PC-3 (cell line): ENCODE measurements at regions of chr1 and their contacts with region 1.

Region 1: DNA sequence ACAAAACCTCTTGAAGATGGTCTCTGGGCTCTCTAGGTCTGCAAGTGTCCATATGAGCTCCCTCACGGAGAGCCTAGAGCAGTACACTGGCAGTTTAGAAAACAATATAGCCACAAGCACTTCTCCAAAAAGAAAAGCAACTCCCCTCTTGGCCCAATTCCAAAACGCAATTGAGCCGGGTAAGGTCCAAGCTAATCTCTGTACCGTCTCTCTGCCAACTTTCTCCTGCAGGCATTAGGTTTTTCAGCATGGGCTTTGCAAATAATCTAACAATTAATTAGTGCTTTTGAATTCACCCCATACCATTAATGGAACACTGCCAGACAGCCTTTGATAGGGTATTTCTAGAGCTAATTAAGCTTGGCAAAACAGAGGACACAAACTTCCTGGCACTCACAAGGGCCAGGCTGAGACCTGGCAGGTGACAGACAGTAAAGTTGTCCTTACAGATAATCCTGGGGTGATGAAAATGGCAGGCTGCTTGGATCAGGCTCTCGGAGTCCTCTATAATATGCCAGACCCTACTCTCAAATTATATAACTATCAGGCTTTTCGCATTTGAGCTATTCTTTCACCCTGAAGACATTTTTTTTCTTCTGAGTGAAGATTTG is 39.8 kb downstream of the TGFBR3 start:
- DNase-seq: peak; percentile 59
- ATAC-seq: peak; percentile 4; the same call in 1 of the 2 replicates
- H3K4me3 ChIP-seq: no peak overlapping the region
- H3K27ac ChIP-seq: peak overlapping the region; percentile 69; the same call in 1 of the 2 replicates
- H3K4me1 ChIP-seq: peaks cover 30% of the 10 kb centered on the region
- H3K27me3 ChIP-seq: no peaks in the 10 kb centered on the region
- CTCF ChIP-seq: no peak

Region 2: DNA sequence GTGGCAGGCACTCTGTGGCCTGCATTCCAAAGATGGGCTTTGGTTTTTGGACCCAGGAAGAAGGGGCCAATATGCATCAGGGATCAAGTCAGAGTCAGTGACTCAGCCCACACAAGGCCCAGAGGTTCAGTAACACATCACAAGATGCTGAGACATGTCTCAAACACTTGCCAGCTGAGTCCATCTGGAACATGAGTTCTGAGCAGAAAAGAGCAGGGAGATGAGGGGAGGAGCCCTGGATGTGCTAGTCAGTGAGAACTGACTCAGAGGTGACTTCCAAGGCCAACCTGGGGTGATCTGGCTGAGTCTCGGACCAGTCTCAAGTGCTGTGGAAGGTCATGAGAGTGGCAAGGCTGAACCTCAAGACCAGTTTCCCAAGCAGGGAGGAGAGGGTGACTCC is 195.3 kb before region 1 on chr1:
- CTCF ChIA-PET with region 1: no interaction called
- POLR2A ChIA-PET with region 1: interaction called, 10 read pairs
- intact Hi-C with region 1: no loop called
- DNase-seq: peak; percentile 59
- ATAC-seq: peak; percentile 77
- H3K4me3 ChIP-seq: no peak overlapping the region
- H3K27ac ChIP-seq: no peak overlapping the region
- H3K4me1 ChIP-seq: peaks cover 17% of the 10 kb centered on the region
- H3K27me3 ChIP-seq: no peaks in the 10 kb centered on the region
- CTCF ChIP-seq: no peak

Region 3: DNA sequence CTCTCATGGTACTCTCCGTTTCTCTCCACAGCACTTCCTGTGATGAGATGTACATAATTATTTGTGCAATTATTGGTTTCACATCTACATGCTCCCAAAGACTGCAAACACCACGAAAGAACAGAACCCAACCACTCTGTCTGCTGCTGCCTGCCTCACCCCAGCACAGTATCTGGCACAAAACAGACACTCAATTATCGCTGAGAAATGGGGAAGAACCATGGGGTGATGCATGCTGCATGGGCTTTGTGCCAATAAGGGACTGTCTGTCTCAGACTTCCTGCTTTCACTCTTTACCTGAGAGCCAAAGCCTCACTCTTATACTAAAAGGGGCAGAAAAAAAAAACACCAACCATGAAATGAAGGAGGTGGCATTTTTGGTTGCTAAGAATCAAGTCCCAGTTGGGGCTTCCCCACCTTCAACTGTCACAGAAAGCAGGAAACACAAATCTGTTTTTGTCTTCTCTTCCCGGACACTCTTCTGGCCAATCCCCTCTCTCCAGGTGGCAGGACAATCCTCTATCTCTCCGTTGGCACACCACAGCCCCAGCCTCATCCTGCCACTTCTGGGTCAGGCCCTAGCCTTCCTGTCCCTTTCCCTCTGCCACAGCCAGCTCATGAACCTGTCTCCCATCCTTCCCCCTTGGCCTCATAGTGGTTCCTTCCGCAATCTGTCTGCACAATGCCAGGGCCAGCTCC is 42.1 kb before region 1 on chr1:
- CTCF ChIA-PET with region 1: interaction called, 13 read pairs
- POLR2A ChIA-PET with region 1: no interaction called
- intact Hi-C with region 1: no loop called
- DNase-seq: peak; percentile 38
- ATAC-seq: no peak
- H3K4me3 ChIP-seq: no peak overlapping the region
- H3K27ac ChIP-seq: peak overlapping the region; percentile 81
- H3K4me1 ChIP-seq: peaks cover 21% of the 10 kb centered on the region
- H3K27me3 ChIP-seq: no peaks in the 10 kb centered on the region
- CTCF ChIP-seq: no peak